ENCODE measurements at regions of chr20 and their contacts with region 1.

Region 1: DNA sequence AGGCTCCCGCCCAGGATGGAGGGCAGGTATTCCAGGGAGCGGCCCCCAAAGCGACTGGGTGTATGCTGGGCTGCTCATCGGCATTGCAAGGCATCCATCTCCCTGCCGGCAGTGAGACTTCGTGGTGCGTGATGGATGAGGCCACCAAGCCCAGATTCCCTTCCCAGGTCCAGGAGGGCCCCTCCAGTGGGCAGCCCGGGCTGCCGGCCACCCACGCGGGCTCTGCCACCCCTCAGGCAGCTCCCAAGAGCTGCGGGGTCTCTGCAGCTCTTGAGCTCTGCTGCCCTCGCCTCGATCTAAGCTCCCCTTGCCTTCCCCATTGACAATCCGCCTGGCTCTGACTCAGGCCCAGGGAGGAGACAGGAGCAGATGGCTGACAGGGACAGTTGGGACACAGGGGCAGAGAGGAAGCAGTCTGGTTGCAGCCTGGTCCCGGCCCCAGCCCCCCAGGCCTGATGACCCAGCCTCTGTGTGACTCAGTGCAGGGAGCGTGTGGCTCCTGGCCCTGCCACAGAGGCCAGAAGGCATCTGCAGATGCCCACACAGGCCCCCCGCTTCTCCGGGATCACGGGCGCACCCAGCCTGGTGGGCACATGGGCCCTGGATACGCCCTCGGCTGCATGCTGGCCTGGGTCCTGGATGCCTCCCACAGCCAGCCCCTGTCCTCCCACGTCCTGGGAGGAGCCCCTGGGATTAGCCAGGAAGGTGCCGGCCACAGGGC is 33.0 kb downstream of the SLCO4A1 start:
- DNase-seq: no peak
- H3K4me3 ChIP-seq: no peak overlapping the region
- H3K27ac ChIP-seq: no peak overlapping the region
- H3K4me1 ChIP-seq: no peaks in the 10 kb centered on the region
- H3K27me3 ChIP-seq: no peaks in the 10 kb centered on the region; a peak in 1 of 7 replicates
- CTCF ChIP-seq: no peak
- EP300 ChIP-seq: no peak
- POLR2A ChIP-seq: no peak
- RAD21 ChIP-seq: no peak

Region 2: DNA sequence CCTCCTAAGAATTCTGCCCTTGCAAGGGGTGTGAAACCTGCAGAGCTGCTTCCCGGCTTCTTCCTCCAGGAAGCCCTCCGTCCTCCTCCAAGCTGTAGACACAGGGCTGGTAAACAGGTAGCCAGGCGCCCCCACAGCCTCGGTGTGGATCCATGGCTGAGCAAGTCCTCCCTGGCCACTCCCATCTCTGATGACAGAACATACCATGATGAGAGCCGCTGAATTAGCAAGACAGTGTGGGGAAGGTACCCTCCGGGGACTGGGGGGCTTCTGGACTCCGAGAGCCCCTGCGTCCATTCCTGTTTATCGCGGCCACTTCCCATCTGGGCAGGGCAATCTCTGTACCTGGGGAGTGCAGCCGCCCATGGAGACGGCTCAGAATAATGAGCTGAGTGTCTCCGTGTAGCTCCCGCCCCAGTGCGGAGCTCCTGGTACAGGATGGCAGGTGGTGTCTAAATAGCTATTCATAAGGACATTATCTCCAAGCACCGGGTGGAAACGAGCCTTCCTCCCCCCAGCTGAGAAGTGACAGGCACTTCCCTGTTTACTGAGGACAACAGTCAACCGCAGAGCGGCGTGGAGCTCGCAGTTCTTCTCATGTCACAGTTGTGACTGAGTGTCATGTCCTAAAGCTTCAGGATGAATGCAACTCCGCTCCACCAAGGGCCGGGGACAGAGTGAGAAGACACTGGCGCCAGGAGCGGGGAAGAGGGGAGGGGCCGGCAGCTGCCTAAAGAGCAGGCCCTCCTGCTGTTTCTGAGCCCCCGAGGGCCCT is 10.7 kb after region 1 on chr20:
- CTCF ChIA-PET with region 1: interaction called, 11 read pairs
- POLR2A ChIA-PET with region 1: no interaction called
- DNase-seq: no peak
- H3K4me3 ChIP-seq: no peak overlapping the region
- H3K27ac ChIP-seq: no peak overlapping the region
- H3K4me1 ChIP-seq: peaks cover 0 to 3% (median 0%) of the 10 kb centered on the region in 4 experiments; a peak in 2 of 7 replicates
- H3K27me3 ChIP-seq: no peaks in the 10 kb centered on the region; a peak in 1 of 7 replicates
- CTCF ChIP-seq: no peak
- EP300 ChIP-seq: no peak
- POLR2A ChIP-seq: no peak
- RAD21 ChIP-seq: no peak

Measured in H1 (cell line).